Testis (tissue), 5 donors: ENCODE measurements at regions of chr12 and their contacts with region 1.

Region 1: DNA sequence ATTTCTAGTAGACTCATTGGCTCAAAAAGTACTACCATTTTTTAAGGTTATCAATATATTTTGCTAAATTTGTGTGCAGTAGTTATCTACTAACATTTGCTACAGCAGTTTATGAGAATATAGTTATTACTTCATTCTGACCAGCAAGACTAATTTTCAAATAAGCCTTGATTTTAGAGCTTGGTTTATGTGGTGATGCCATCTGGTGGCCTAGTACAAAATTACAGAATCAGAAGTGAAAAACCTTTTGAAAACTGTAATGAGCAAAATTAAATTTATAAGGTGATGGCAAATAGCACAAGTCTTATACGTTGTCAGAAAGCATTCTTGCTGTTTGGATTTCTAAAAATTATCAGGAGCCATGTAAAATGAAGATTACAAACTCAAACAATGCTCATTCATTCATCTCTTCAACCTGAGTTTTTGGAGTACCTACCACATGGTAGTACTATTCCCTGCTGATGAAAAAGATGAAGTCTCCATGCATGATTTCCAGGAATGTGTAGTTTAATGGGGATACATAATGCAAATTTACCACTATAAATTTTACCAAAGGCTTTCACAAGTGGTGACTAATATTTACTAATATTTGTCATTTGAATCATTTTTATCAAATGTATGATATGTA is 51.0 kb downstream of the MAGOHB start:
- DNase-seq: no peak
- H3K4me3 ChIP-seq: no peak overlapping the region
- H3K27ac ChIP-seq: no peak overlapping the region
- H3K4me1 ChIP-seq: no peaks in the 10 kb centered on the region
- H3K27me3 ChIP-seq: no peaks in the 10 kb centered on the region
- CTCF ChIP-seq: peak; percentile 59 to 77 (median 67)
- POLR2A ChIP-seq: no peak

Region 2: DNA sequence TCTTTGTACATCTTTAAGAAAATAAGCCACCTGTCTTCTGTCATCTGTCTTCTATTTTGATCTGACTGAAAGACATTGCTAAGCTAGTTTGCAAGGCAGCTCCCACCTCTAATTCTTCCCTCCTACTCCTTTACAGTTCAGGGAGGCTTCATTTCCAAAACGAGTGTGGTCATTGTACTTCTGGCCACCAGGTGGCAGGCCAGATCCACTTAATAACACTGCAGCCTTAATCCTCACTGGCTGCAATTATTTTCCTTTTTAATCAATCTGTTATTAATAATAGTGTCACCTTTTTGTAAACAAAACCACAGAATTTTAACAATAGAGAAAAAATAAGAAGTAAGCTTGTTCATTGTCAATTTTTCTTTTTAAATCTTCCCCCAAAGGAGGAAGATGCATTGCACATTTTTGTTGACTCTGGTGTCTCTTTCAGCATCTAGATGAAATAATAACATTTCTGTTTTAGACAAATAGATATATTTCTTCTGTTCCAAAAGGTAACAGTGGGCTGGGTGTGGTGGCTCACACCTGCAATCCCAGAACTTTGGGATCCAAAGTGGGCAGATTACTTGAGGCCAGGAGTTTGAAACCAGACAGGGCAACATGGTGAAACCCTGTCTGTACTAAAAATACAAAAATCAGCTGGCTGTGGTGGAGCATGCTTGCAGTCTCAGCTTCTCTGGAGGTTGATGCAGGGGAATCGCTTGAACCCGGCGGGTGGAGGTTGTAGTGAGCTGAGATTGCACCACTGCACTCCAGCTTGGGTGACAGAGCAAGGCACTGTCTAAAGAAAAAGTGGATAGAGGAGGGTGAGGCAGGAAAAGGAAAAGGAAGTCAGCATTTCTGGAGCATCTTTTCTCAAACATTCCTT is 326.4 kb before region 1 on chr12:
- intact Hi-C with region 1: loop called (anchors 10 kb)
- DNase-seq: peak; percentile 48
- H3K4me3 ChIP-seq: no peak overlapping the region
- H3K27ac ChIP-seq: no peak overlapping the region
- H3K4me1 ChIP-seq: no peaks in the 10 kb centered on the region
- H3K27me3 ChIP-seq: no peaks in the 10 kb centered on the region
- CTCF ChIP-seq: peak; percentile 92 to 93 (median 92)
- POLR2A ChIP-seq: no peak

Region 3: DNA sequence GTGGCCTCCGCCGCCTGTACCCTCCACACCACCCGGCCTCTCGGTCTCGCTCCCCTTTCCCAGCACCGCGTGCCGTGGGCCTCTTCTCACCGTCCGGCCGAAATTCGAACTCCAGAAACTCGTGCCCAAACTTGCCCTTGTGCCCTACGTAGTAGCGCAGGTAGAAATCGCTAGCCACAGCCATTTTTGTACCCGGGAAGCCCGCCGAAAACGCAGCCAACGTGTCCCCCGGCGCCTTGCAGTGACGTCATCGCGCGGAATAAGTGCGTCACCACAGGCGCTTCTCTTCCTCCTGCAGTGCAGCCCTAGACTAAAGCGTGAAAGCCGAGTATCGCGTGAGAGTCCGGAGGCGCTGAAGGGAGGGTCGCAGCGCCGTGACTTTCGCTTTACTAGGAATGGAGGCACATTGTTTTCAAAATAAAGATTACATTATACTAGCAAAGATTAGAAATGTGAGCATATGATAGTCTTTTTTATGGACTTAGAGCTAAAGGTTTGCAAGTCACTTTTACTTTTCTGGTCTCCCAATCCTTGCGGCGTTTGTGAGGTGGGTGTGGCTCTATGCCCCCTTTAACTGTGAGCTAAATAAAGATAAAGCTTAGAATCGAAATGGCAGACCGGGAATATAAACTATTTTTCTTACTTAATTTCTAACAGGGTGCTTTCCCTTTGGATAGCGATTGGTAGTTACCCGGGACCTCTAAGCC is 51.1 kb after region 1 on chr12 and contains the start of gene MAGOHB:
- intact Hi-C with region 1: no loop called
- DNase-seq: peak; percentile 97
- H3K4me3 ChIP-seq: peak within 1 kb of the TSS; percentile 71 to 78
- H3K27ac ChIP-seq: peak within 1 kb of the TSS; percentile 80 to 83
- H3K4me1 ChIP-seq: peaks cover 7% of the 10 kb centered on the region
- H3K27me3 ChIP-seq: no peaks in the 10 kb centered on the region
- CTCF ChIP-seq: peak in 2 of 3 experiments; percentile 13 to 25
- POLR2A ChIP-seq: peak; percentile 25
- total RNA-seq, gene MAGOHB: 16.1 to 16.7 TPM